Left lung (tissue), 14 donors: ENCODE measurements at regions of chr2 and their contacts with region 1.

Region 1: GRCh38 chr2:237026981-237027711 is 58.5 kb upstream of the COPS8 start:
- DNase-seq: peak; percentile 62 to 88 (median 74)
- ATAC-seq: peak; percentile 96
- H3K4me3 ChIP-seq: no peak overlapping the region
- H3K27ac ChIP-seq: no peak overlapping the region
- H3K4me1 ChIP-seq: peaks cover 0 to 5% of the 10 kb centered on the region in 2 donors
- H3K27me3 ChIP-seq: no peaks in the 10 kb centered on the region
- CTCF ChIP-seq: peak; percentile 65 to 76

Region 2: DNA sequence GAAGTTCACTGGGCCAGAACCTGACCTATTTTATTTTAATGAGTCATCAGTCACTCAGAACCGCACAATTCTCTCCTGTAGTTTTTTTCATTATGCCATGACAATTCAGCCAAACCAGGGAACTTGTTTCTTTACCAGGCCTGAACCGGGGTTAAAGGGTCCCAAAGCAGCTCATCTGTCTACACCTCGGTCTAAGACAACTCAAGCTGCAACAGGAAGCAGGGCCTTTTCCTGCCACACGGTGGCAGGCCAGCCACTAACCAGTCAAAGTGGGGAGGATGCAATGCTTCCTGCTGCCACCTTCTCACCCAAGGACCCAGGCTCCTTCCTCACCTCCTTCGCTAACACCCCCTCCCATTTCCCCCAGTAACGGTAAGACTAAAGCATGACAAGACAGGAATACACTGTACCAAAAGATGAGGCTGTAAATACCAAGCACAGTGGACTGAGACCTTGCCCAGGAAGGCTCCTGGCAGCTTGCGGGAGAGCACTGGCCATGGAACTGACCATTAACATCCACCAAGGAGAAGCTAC is 514.2 kb before region 1 on chr2:
- intact Hi-C with region 1: loop called in 1 of 2 experiments (anchors 10 kb)
- DNase-seq: peak; percentile 44 to 86 (median 58)
- ATAC-seq: peak; percentile 93
- H3K4me3 ChIP-seq: no peak overlapping the region
- H3K27ac ChIP-seq: no peak overlapping the region
- H3K4me1 ChIP-seq: peaks cover 2 to 6% of the 10 kb centered on the region in 2 donors
- H3K27me3 ChIP-seq: peaks cover 0 to 12% of the 10 kb centered on the region in 2 donors
- CTCF ChIP-seq: peak; percentile 65 to 88